ENCODE measurements at regions of chr6 and their contacts with region 1.

Region 1: DNA sequence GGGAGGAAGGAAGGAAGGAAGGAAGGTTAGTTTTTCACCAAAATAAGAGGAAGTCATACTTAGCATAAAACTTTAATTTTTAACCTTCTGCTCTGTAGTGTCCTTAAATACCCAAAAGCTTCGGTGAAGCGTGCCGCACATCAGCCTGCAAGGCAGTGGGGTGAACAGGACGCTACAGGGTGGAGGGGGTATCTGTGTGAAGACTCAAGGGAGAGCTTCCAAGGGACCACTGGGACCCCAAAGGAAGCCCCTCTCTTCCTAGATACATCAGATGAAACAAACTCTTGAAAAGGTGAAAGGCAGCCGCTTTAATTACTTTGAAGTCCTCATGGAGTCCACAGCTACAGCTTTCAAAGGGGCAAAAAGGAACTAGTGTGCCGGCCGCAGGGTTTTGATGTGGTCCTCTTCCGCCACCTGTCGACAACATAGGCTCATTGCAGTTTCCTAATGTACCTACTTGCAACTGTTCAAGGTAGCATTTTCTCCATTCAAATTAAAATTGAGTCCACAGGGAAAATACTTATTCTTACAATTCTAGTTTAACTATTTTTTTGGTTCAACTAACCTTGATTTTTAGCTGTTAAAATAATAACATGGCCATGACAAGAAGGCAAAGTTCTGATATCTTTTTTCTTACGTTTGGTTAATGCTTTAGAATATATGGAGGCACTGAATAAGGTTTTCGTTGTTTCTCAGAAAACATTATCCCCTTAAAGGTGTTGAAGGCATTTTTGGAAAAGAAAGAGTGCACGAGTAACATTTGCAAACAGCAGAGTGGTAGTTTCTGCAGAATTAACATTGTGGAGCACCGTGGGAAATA is 135.0 kb upstream of the RIPOR2 start:
- DNase-seq: peak; percentile 54
- H3K4me3 ChIP-seq: no peak overlapping the region
- H3K27ac ChIP-seq: no peak overlapping the region
- H3K4me1 ChIP-seq: no peaks in the 10 kb centered on the region
- H3K27me3 ChIP-seq: no peaks in the 10 kb centered on the region
- CTCF ChIP-seq: peak; percentile 90 to 91

Region 2: DNA sequence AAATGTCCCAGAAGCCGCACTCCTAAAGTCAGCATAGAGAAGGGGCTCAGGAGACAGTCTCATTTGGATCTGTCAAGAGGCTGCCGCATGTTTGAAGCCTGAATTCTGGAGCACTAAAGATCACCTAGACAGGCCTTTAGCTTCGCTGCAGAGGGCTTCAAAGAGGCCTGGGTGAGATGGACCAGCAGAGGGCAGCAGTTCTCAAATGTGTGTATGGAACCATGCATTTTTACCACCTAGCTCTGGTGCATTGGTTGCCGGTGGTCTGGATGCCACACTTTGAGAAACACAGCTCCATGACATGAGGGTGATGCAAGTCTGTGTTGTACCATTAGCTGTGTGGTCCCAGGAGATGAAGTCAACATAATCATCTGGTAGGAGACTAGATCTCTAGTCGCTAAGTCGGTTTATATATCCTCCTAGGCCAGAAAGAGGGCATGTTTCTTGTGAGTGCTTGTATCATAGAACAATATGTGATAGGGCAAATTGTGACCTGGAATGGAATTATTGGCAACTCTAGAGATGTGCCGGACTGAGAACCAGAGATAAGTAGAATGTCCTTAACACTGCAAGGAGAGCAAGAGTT is 489.6 kb before region 1 on chr6:
- CTCF ChIA-PET with region 1: no interaction called
- dilution Hi-C with region 1: no loop called
- in situ Hi-C with region 1: no loop called
- intact Hi-C with region 1: loop called (anchors 2 kb)
- DNase-seq: peak; percentile 38
- H3K4me3 ChIP-seq: no peak overlapping the region
- H3K27ac ChIP-seq: no peak overlapping the region
- H3K4me1 ChIP-seq: no peaks in the 10 kb centered on the region
- H3K27me3 ChIP-seq: no peaks in the 10 kb centered on the region
- CTCF ChIP-seq: peak; percentile 84 to 93

Region 3: GRCh38 chr6:24766680-24767462 is 303.9 kb before region 1 on chr6:
- CTCF ChIA-PET with region 1: no interaction called
- dilution Hi-C with region 1: no loop called
- in situ Hi-C with region 1: no loop called
- intact Hi-C with region 1: loop called (anchors 5 kb)
- DNase-seq: peak; percentile 20
- H3K4me3 ChIP-seq: no peak overlapping the region
- H3K27ac ChIP-seq: no peak overlapping the region
- H3K4me1 ChIP-seq: peaks cover 4% of the 10 kb centered on the region
- H3K27me3 ChIP-seq: no peaks in the 10 kb centered on the region
- CTCF ChIP-seq: peak; percentile 39 to 49

Region 4: GRCh38 chr6:24855395-24856245 is 215.1 kb before region 1 on chr6:
- CTCF ChIA-PET with region 1: no interaction called
- dilution Hi-C with region 1: no loop called
- in situ Hi-C with region 1: no loop called
- intact Hi-C with region 1: loop called (anchors 1 kb)
- DNase-seq: peak; percentile 54
- H3K4me3 ChIP-seq: no peak overlapping the region
- H3K27ac ChIP-seq: no peak overlapping the region
- H3K4me1 ChIP-seq: peaks cover 25% of the 10 kb centered on the region
- H3K27me3 ChIP-seq: no peaks in the 10 kb centered on the region
- CTCF ChIP-seq: peak; percentile 75 to 86

Region 5: GRCh38 chr6:24968786-24969185 is 102.0 kb before region 1 on chr6:
- CTCF ChIA-PET with region 1: no interaction called
- dilution Hi-C with region 1: no loop called
- in situ Hi-C with region 1: no loop called
- intact Hi-C with region 1: no loop called
- DNase-seq: no peak
- H3K4me3 ChIP-seq: no peak overlapping the region
- H3K27ac ChIP-seq: no peak overlapping the region
- H3K4me1 ChIP-seq: no peaks in the 10 kb centered on the region
- H3K27me3 ChIP-seq: no peaks in the 10 kb centered on the region
- CTCF ChIP-seq: no peak

Region 6: DNA sequence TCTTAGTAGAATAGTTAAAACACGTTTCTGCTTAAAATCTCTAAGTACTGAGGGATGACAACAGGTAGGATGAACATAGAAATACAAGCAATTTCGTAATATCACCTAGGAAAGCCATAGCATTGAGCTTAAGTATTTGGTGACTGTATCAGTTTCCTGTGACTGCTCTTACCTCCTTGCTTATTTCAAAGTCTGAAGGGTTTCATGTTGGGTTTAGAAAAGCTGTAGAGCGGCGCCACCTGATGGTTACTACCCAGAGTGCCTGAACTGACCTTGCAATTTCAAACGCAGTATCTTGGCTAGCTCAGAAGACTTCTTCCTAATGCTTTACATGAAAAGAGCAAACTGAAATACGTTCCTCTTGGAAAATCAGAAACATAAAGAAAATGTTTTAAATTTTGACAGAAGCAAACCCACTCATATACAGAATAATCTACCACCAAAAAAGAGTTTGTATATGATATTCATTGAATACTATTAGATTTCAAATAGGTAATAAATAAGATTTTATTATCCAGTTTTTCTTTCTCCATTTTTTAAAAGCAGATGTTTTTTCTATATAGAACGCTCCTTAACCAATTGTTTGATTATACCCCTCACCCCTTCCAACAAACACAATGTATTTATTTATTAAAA is 52.7 kb before region 1 on chr6:
- CTCF ChIA-PET with region 1: interaction called, 4 read pairs
- dilution Hi-C with region 1: no loop called
- in situ Hi-C with region 1: no loop called
- intact Hi-C with region 1: loop called (anchors 1 kb)
- DNase-seq: peak; percentile 78
- H3K4me3 ChIP-seq: peak overlapping the region in 1 of 3 experiments; percentile 2
- H3K27ac ChIP-seq: peak overlapping the region; percentile 72
- H3K4me1 ChIP-seq: peaks cover 44% of the 10 kb centered on the region
- H3K27me3 ChIP-seq: no peaks in the 10 kb centered on the region
- CTCF ChIP-seq: peak; percentile 90